Prostate gland (tissue), 2 donors: ENCODE measurements at regions of chr12 and their contacts with region 1.

Region 1: GRCh38 chr12:2163172-2163941 is 110.6 kb downstream of the CACNA1C start:
- DNase-seq: no peak
- H3K4me3 ChIP-seq: no peak overlapping the region
- H3K27ac ChIP-seq: peak overlapping the region in 1 of 2 donors; percentile 40
- H3K4me1 ChIP-seq: peaks cover 13% of the 10 kb centered on the region
- H3K27me3 ChIP-seq: no peaks in the 10 kb centered on the region
- CTCF ChIP-seq: no peak
- POLR2A ChIP-seq: no peak

Region 2: DNA sequence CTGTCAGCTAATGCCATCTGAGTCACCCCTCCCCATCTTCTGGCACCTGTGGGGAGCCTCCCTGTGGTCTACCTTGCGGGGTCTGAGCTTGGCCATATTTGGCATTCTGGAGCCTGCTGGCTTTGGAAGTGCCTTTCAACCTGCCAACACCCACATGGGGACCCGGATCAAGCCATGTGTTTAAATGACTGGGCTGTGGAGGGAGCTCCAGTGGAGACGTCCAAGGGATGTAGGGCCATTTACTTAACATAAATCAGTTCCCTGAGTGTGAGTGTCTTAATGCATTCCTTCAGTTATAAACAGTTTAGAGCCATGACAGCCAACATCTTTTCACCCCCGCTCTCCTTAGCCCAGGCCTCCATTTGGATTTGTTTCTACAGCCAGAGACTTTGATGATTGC is 88.6 kb before region 1 on chr12:
- intact Hi-C with region 1: loop called (anchors 5 kb)
- DNase-seq: no peak
- H3K4me3 ChIP-seq: no peak overlapping the region
- H3K27ac ChIP-seq: peak overlapping the region; percentile 41 to 49
- H3K4me1 ChIP-seq: no peaks in the 10 kb centered on the region
- H3K27me3 ChIP-seq: no peaks in the 10 kb centered on the region
- CTCF ChIP-seq: no peak
- POLR2A ChIP-seq: no peak

Region 3: DNA sequence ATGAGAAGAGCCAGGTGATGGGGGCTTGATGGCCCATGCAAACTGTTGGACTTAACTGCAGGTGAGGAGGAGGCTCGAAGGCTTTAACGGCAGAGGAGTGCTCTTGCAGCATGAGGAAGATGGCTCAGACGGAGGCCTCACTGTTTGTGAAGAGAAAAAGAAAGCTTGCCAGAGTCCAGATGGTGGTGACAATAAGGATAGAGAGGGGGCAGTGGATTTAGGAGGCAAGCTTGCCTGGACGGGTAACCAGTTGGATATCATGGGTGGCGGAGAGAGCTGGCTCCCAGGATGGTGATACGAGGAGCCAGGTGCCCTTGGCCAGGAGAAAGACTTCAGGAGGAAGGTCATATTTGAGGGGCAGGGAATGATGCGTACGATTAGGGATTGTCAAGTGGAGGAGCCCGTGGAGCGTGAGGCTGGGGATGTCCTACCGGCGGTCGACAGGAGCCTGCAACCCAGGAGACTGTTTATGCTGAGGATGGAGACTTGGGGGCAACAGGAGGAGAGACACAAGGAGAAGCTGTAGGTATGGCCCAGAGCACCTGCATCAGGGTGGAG is 38.8 kb before region 1 on chr12:
- intact Hi-C with region 1: loop called (anchors 5 kb)
- DNase-seq: no peak
- H3K4me3 ChIP-seq: no peak overlapping the region
- H3K27ac ChIP-seq: no peak overlapping the region
- H3K4me1 ChIP-seq: no peaks in the 10 kb centered on the region
- H3K27me3 ChIP-seq: no peaks in the 10 kb centered on the region
- CTCF ChIP-seq: no peak
- POLR2A ChIP-seq: no peak

Region 4: DNA sequence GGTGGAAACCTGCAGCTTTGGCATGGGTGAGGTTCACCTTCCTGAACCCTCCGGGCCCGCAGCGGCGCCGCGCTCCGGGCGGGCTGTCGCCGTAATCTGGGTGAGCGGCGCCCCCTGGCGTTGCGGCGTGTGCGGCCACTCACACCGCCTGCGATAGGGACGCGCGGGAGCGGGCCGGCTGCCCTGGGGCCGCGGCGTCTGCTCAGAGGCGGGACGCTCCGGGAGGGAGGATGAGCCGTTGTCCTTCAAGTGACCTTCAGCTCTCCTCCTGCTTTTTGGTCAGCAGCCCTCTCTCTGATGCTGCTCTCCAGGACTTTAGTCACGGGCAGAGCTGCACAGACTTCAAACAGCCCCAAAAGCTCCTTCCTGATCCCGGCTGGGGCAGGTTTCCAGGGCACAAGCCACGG is 419.7 kb after region 1 on chr12:
- intact Hi-C with region 1: loop called (anchors 10 kb)
- DNase-seq: peak; percentile 36
- H3K4me3 ChIP-seq: no peak overlapping the region
- H3K27ac ChIP-seq: no peak overlapping the region
- H3K4me1 ChIP-seq: no peaks in the 10 kb centered on the region
- H3K27me3 ChIP-seq: no peaks in the 10 kb centered on the region
- CTCF ChIP-seq: peak; percentile 75 to 96 (median 87)
- POLR2A ChIP-seq: no peak